ENCODE measurements at regions of chr6 and their contacts with region 1.

Region 1: DNA sequence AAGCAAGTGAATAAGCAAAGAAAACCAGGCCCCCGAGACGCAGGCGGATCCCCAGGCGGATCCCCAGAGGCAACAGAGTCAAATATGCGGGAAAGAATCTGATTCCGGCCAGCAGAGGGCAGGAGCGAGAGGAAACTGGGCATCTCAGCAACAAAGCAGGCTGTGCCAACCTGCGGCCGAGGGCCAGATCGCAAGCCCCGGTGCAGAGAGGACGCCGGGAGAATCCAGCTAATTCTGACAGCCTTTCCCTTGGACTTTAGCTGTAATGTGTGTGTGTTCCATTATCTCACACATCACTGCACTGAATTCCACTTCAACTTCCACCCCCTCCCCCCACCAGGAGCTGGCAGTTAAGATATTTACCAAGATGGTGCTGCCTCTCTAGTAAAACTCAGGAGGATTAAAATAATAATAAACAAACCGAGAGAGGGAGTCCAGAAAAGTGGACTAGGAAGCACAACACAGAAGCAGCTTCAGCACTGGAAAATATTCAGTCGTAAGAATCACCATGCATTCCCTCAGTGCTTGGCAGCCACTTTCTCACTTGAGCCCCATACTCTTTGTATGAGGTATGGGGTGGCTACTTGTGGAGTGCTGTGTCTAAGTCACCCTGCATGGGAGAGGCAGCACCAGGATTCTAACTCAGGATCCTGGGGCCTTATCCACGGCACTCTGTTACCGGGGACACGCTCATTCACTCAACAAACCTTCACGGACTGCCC is 66.2 kb upstream of the SNX9 start:
- DNase-seq: peak; percentile 88
- ATAC-seq: peak; percentile 92

Region 2: DNA sequence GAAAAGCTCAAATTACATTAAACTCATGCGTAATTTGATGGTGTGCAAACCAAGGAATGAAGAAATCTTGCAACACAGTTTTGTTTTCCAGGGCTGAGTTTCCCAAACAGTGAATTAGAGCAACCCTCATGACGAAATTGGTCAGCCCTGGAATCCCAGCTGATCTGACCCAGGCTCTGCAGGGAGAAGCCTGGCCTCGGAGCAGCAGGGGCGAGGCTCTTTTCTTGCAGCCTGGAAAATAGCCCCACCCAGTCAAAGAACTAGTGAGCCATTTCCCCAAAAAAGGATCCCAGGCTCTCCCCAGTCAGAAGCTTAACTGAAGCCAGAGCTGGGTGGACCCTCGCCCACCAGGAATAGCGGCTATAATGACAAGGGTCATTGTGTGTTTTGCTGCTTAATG is 41.1 kb before region 1 on chr6:
- intact Hi-C with region 1: loop called (anchors 5 kb)
- DNase-seq: peak; percentile 81
- ATAC-seq: peak; percentile 90

Region 3: DNA sequence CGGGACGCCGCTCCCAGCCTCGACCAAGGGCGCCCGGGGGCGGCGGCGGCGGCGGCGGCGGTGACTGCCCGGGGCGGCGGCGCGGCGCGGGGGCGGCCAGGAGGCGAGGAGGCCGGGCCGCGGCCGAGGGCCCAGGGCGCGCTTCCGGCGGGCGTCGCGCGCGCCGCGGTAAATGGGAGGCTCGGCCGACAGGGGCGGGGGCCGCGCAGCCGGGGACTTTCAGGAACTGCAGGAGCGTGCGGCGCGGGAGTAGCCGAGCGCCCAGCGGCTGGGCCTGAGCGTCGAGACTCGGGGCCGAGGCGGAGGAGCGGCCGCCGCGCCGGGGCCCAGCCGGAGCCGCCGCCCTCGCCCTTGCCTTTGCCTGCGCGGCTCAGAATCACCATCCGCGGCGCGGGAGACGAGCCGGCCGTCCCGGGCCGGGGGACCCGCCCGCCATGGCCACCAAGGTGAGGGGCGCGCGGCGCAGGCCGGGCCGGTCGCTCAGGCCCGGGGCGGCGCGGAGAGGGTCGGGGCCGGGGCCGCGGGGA is 66.2 kb after region 1 on chr6 and contains the start of gene SNX9:
- intact Hi-C with region 1: loop called (anchors 2 kb)
- DNase-seq: peak; percentile 92
- ATAC-seq: peak; percentile 97
- total RNA-seq, gene SNX9: 35.5 TPM

Region 4: DNA sequence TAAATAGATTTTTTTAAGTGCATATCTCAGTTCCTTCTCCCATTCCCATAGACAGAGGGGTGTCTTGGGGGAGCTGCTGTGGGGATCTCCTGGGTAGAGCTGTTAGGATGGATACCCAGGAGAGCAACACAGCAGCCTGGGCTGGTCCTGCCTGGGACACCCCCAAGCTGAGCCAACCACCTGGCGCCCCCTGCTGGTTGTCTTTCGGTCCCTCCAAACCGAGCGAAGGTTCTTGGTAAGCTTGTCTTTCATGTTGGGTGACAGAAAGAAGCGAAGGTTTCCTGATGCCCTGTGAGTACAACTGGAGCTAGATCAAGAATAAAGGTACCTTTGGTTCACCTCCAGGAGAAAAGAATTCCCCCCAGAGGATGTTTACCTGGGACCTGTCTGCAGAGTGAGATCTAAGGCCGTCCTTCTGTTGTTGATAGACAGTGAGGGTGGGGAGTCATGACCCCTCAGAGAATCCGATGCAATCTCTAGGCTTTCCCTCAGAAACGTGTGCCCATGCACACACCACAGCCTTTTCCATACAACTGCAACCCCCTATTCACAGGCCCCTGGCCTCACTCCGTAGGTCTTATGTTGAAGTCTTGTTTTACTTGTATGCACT is 117.0 kb after region 1 on chr6:
- intact Hi-C with region 1: loop called (anchors 2 kb)
- DNase-seq: peak; percentile 87
- ATAC-seq: peak; percentile 74

Region 5: DNA sequence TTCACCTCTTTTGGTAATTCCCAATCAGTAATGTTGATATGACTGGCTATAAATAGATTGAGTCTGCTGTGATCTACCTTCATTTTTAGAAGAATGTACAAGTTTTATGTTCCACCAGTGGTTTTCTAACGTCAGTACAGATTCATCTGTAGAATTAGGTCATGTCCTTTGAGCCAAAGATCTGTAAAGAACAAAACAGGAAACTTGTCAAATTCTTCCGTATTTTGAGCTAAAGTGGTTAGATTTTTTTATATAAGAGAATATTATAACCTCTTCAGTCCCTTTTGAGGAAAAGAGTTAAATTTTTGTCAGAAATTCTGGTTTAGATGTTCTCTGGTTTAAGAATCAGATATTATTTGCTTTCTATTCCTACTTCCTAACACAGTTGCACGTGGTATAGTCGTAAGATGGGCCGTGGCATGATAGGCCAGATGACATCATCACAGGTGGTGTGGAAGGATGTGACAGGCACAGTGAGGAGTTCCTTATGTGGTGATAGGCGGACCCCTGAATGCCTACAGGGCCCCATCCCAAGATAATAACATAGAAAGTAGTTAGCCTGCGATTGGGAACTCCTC is 128.4 kb after region 1 on chr6:
- intact Hi-C with region 1: no loop called
- DNase-seq: no peak
- ATAC-seq: no peak

Region 6: GRCh38 chr6:158040051-158040803 is 283.4 kb after region 1 on chr6:
- intact Hi-C with region 1: no loop called
- DNase-seq: no peak
- ATAC-seq: peak; percentile 12

Region 7: GRCh38 chr6:158072083-158072721 is 315.3 kb after region 1 on chr6:
- intact Hi-C with region 1: loop called (anchors 10 kb)
- DNase-seq: no peak
- ATAC-seq: peak; percentile 66